Keratinocyte (primary cell): ENCODE measurements at regions of chr6 and their contacts with region 1.

Region 1: GRCh38 chr6:56451165-56451739 is 191.4 kb downstream of the DST start:
- DNase-seq: no peak
- H3K4me3 ChIP-seq: no peak overlapping the region
- H3K27ac ChIP-seq: no peak overlapping the region
- H3K4me1 ChIP-seq: no peaks in the 10 kb centered on the region
- H3K27me3 ChIP-seq: no peaks in the 10 kb centered on the region
- CTCF ChIP-seq: no peak

Region 2: DNA sequence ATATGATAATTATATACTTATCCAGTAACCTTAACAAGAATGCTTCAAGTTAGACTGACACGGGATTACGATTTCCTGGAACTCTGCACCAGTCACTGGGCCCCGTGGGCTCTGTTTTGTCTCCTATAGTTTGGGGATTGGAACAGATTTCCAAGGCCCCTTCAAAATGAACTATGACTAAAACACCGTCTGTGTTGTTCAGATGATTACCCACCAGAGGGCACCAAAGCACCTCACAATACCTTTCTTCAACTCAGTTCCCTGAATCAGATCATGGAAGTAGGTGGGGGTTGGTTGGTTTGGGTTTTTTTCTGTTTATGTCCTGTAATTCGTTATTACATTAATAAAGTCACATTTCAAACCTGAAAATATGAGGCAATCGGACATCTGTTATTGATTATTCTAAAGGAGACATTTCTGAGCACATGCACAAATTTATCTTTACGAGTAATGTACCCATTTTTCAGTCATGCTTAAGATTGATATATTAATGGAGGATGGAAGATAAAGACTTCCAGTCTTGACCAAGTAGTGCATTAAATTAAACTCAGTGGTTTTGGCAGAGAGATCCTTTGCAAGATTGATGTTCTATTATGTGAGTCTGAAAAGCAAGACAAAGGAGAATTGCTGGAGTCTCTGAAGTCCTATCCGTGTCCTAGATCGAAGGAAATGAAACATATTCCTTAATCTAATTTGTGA is 91.9 kb before region 1 on chr6:
- dilution Hi-C with region 1: loop called (anchors 25 kb)
- DNase-seq: no peak
- H3K4me3 ChIP-seq: no peak overlapping the region
- H3K27ac ChIP-seq: no peak overlapping the region
- H3K4me1 ChIP-seq: peaks cover 18% of the 10 kb centered on the region
- H3K27me3 ChIP-seq: no peaks in the 10 kb centered on the region
- CTCF ChIP-seq: peak; percentile 63 to 75 (median 72)

Region 3: GRCh38 chr6:56542364-56543331 is 91.4 kb after region 1 on chr6:
- dilution Hi-C with region 1: no loop called
- DNase-seq: peak; percentile 62
- H3K4me3 ChIP-seq: peak overlapping the region; percentile 49 to 81 (median 69)
- H3K27ac ChIP-seq: peak overlapping the region; percentile 97
- H3K4me1 ChIP-seq: peaks cover 38% of the 10 kb centered on the region
- H3K27me3 ChIP-seq: no peaks in the 10 kb centered on the region
- CTCF ChIP-seq: peak in 2 of 3 experiments; percentile 38 to 48